Activated CD4-positive, alpha-beta memory T cell treated with anti-CD3 and anti-CD28 coated beads for 36 hours (primary cell): ENCODE measurements at regions of chr3 and their contacts with region 1.

Region 1: GRCh38 chr3:115814778-115815380 is 191.6 kb downstream of the GAP43 start:
- DNase-seq: peak; percentile 78
- H3K4me3 Mint-ChIP-seq: no peak overlapping the region
- H3K27ac Mint-ChIP-seq: no peak overlapping the region
- H3K4me1 Mint-ChIP-seq: no peaks in the 10 kb centered on the region
- H3K27me3 Mint-ChIP-seq: peaks cover 2% of the 10 kb centered on the region

Region 2: GRCh38 chr3:114827495-114827894 is 987.4 kb before region 1 on chr3:
- CTCF ChIA-PET with region 1: interaction called, 3 read pairs
- POLR2A ChIA-PET with region 1: no interaction called
- intact Hi-C with region 1: loop called (anchors 1 kb)
- DNase-seq: no peak
- H3K4me3 Mint-ChIP-seq: no peak overlapping the region
- H3K27ac Mint-ChIP-seq: no peak overlapping the region
- H3K4me1 Mint-ChIP-seq: peaks cover 4% of the 10 kb centered on the region
- H3K27me3 Mint-ChIP-seq: no peaks in the 10 kb centered on the region

Region 3: DNA sequence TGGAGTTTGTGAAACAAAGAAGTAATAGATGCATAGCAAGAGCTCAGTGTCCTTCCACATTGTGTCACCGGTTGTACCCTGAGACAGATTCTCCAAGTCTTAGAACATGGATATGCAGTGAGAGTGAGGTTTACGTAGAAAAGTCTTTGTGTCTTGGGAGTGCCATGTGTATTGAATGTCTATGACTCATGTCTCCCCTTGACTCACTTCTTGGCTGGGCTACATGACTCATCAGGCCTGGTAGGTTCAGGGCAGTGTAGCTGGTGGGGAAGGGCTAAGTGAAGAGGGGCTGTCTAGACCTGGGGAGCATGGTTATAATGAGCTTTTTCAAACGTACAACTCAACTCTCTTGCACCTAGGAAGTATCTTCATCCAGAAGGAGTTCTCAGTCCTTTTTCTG is 24.1 kb before region 1 on chr3:
- CTCF ChIA-PET with region 1: interaction called, 21 read pairs
- POLR2A ChIA-PET with region 1: no interaction called
- intact Hi-C with region 1: no loop called
- DNase-seq: peak; percentile 76
- H3K4me3 Mint-ChIP-seq: no peak overlapping the region
- H3K27ac Mint-ChIP-seq: no peak overlapping the region
- H3K4me1 Mint-ChIP-seq: peaks cover 31% of the 10 kb centered on the region
- H3K27me3 Mint-ChIP-seq: no peaks in the 10 kb centered on the region

Region 4: DNA sequence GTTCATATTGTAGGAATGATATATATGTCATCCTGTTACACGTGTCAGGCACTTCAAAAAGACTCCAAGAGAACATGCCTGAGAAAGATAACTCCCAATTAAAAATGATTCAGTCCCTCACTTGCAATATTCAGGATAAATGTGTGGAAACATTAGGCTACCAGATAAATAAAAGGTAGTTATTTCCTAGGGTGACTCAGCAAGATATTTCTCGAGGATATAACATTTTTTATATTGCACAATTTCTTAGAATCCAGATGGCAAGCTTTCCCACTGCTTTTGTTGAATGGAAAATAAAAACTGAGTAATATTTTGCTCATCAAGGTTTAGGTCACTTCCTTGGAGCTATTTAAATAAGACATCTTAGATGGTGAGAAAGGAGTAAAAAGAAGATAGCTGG is 10.2 kb before region 1 on chr3:
- CTCF ChIA-PET with region 1: interaction called, 15 read pairs
- POLR2A ChIA-PET with region 1: no interaction called
- intact Hi-C with region 1: no loop called
- DNase-seq: no peak
- H3K4me3 Mint-ChIP-seq: no peak overlapping the region
- H3K27ac Mint-ChIP-seq: no peak overlapping the region
- H3K4me1 Mint-ChIP-seq: peaks cover 5% of the 10 kb centered on the region
- H3K27me3 Mint-ChIP-seq: peaks cover 31% of the 10 kb centered on the region

Region 5: DNA sequence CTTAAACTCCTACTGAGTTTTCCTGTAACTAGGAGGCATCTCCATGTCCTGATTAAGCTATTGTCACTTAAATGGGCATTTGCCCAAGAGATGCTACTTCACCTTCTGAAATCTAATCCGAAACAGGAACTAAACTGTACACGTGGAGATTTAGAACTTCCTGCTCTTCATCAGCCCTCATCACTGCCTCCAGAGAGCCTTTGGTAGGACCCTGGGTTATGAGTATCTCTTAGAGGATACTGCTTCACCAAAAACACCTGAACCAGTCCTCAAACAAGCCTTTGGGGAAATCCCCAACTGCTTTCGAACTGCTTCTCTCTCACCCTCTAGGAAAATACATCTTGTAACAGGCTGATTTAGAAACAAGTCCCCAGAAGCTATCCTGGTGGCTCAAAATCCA is 128.7 kb after region 1 on chr3:
- CTCF ChIA-PET with region 1: no interaction called
- POLR2A ChIA-PET with region 1: no interaction called
- intact Hi-C with region 1: no loop called
- DNase-seq: no peak
- H3K4me3 Mint-ChIP-seq: no peak overlapping the region
- H3K27ac Mint-ChIP-seq: no peak overlapping the region
- H3K4me1 Mint-ChIP-seq: no peaks in the 10 kb centered on the region
- H3K27me3 Mint-ChIP-seq: peaks cover 4% of the 10 kb centered on the region